ENCODE measurements at regions of chr2 and their contacts with region 1.

Region 1: DNA sequence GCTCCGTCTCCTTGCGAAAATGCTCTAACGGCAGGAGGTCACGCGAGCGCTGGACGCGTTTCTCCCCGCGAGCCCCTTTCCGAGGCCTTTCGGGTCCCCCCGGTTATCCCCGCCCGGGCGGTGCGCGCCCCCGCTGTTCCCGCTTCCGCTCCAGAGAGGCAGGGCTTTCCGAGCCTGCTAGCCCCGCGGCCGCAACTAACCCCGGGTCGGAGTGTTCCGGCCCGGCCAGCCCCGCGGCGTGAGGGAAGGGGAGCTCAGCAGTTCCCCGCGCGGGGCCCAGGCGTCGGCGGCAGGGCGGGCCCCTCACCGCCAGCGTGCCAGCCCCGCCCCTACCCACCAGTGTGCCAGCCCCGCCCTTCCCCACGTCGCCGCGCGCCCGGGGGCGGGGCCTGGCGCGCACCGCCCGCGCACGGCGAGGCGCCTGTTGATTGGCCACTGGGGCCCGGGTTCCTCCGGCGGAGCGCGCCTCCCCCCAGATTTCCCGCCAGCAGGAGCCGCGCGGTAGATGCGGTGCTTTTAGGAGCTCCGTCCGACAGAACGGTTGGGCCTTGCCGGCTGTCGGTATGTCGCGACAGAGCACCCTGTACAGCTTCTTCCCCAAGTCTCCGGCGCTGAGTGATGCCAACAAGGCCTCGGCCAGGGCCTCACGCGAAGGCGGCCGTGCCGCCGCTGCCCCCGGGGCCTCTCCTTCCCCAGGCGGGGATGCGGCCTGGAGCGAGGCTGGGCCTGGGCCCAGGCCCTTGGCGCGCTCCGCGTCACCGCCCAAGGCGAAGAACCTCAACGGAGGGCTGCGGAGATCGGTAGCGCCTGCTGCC is at the start of gene MSH6:
- DNase-seq: peak; percentile 87
- H3K4me3 Mint-ChIP-seq: peak within 1 kb of the TSS; percentile 91
- H3K27ac Mint-ChIP-seq: peak within 1 kb of the TSS; percentile 84
- H3K4me1 Mint-ChIP-seq: peaks cover 32% of the 10 kb centered on the region
- H3K27me3 Mint-ChIP-seq: no peaks in the 10 kb centered on the region
- total RNA-seq, gene MSH6: 127 to 128 TPM

Region 2: GRCh38 chr2:47297767-47298425 is 485.0 kb before region 1 on chr2:
- CTCF ChIA-PET with region 1: no interaction called
- intact Hi-C with region 1: no loop called
- DNase-seq: no peak
- H3K4me3 Mint-ChIP-seq: no peak overlapping the region
- H3K27ac Mint-ChIP-seq: no peak overlapping the region
- H3K4me1 Mint-ChIP-seq: peaks cover 9% of the 10 kb centered on the region
- H3K27me3 Mint-ChIP-seq: peaks cover 7% of the 10 kb centered on the region

Region 3: DNA sequence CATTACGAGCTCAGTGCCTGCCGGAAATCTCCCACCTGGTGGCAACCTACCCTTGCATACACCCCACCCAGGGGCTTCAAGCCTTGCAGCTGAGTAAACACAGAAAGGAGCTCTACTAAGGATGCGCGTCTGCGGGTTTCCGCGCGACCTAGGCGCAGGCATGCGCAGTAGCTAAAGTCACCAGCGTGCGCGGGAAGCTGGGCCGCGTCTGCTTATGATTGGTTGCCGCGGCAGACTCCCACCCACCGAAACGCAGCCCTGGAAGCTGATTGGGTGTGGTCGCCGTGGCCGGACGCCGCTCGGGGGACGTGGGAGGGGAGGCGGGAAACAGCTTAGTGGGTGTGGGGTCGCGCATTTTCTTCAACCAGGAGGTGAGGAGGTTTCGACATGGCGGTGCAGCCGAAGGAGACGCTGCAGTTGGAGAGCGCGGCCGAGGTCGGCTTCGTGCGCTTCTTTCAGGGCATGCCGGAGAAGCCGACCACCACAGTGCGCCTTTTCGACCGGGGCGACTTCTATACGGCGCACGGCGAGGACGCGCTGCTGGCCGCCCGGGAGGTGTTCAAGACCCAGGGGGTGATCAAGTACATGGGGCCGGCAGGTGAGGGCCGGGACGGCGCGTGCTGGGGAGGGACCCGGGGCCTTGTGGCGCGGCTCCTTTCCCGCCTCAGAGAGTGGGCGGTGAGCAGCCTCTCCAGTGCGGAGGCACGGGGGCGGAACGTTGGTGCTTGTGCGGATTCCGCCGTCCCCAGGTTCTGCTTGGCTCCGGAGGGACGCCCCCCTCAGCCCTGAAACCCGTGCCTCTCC is 379.9 kb before region 1 on chr2 and contains the start of gene MSH2:
- CTCF ChIA-PET with region 1: no interaction called
- intact Hi-C with region 1: loop called (anchors 1 kb)
- DNase-seq: peak; percentile 95
- H3K4me3 Mint-ChIP-seq: peak within 1 kb of the TSS; percentile 90
- H3K27ac Mint-ChIP-seq: peak within 1 kb of the TSS; percentile 97
- H3K4me1 Mint-ChIP-seq: peaks cover 40% of the 10 kb centered on the region
- H3K27me3 Mint-ChIP-seq: no peaks in the 10 kb centered on the region
- total RNA-seq, gene MSH2: 42.7 to 43.3 TPM

Region 4: GRCh38 chr2:47803363-47803762 is 20.5 kb after region 1 on chr2:
- CTCF ChIA-PET with region 1: no interaction called
- intact Hi-C with region 1: loop called (anchors 2 kb)
- DNase-seq: no peak
- H3K4me3 Mint-ChIP-seq: no peak overlapping the region
- H3K27ac Mint-ChIP-seq: peak overlapping the region; percentile 60
- H3K4me1 Mint-ChIP-seq: peaks cover 18% of the 10 kb centered on the region
- H3K27me3 Mint-ChIP-seq: no peaks in the 10 kb centered on the region

Region 5: DNA sequence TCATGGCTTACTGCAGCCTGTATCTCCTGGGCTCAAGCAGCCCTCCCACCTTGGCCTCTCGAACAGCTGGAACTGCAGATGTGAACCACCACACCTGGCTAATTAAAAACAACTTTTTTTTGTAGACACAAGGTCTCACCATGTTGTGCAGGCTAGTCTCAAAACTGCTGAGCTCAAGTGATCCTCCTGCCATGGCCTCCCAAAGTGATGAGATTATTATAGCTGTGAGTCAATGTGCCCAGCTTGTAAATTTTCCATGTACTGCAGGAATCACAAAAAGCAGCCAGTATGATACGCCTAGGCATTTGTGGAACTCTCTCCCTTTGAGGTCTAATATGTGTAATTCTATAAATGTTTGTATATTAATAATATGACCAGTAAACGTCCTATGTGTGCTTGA is 60.0 kb after region 1 on chr2:
- CTCF ChIA-PET with region 1: no interaction called
- intact Hi-C with region 1: no loop called
- DNase-seq: no peak
- H3K4me3 Mint-ChIP-seq: no peak overlapping the region
- H3K27ac Mint-ChIP-seq: peak overlapping the region; percentile 30
- H3K4me1 Mint-ChIP-seq: peaks cover 39% of the 10 kb centered on the region
- H3K27me3 Mint-ChIP-seq: no peaks in the 10 kb centered on the region

Region 6: DNA sequence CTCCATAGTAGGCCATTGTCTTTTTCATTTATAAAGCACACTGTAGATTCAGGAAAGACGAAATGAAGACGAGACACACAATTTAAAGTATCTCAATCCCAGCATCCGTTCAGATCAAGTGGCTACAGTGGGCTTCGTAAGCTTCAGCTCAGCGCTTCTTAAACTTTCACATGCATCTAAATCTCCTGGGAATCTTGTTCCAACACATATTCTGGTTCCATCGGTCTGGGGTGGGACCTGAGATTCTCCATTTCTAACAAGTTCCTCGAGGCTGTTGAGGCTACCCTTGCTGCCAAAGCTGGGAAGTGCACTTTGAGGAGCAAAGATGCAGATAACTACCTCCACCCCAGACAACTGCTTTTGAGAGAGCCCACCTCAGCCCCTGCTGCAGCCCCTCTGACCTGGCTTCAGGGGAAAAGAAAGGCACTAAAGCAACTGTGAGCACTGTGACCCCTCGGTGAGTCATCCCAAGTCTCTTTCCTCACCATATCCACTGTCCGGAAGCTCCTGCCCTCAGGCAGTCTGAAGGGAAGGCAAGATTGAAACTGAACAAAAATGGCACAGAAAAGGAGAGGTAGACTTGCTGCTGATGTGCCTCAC is 324.5 kb after region 1 on chr2:
- CTCF ChIA-PET with region 1: interaction called, 3 read pairs
- intact Hi-C with region 1: loop called (anchors 1 kb)
- DNase-seq: no peak
- H3K4me3 Mint-ChIP-seq: no peak overlapping the region
- H3K27ac Mint-ChIP-seq: peak overlapping the region; percentile 3
- H3K4me1 Mint-ChIP-seq: peaks cover 29% of the 10 kb centered on the region
- H3K27me3 Mint-ChIP-seq: peaks cover 2% of the 10 kb centered on the region

Region 7: GRCh38 chr2:48420512-48421197 is 637.8 kb after region 1 on chr2:
- CTCF ChIA-PET with region 1: no interaction called
- intact Hi-C with region 1: loop called (anchors 2 kb)
- DNase-seq: peak; percentile 97
- H3K4me3 Mint-ChIP-seq: no peak overlapping the region
- H3K27ac Mint-ChIP-seq: peak overlapping the region; percentile 7
- H3K4me1 Mint-ChIP-seq: peaks cover 21% of the 10 kb centered on the region
- H3K27me3 Mint-ChIP-seq: no peaks in the 10 kb centered on the region

Measured in activated naive CD4-positive, alpha-beta T cell treated with anti-CD3 and anti-CD28 coated beads for 36 hours (primary cell).